T-cell (primary cell): ENCODE measurements at regions of chr19 and their contacts with region 1.

Region 1: DNA sequence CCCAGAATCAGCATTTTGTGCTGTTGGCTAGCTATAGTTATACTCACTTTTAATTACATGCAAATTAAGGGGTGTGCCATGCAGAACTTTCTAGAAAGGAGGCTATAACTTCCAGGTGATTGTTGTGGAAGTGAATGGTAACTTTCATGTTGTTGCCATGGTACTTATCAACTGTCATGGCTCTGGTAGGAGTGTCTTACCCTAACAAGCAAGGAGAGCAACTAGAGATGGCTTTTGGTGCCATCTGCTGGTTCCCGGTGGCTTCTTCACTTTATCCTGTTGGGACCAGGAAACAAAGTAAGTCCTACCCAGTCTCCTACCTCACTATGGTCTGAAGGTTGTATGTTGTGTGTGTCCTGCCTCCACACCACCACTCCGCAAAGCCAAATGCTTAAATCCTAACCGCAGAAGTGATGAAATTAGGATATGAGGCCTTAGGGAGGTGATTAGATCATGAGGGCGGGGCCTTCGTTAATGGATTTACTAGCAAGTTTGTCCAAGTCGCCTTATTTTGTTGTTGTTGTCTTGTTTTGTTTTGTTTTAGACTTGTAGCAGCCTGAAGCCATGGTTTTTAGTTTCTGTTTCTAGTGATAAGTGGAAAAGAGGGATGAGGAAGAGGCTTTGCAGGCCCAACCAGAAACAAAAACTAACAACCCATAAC is 22.6 kb downstream of the FBXL12 start:
- DNase-seq: peak; percentile 65 to 94 (median 84)
- ATAC-seq: peak; percentile 26 to 46 (median 40)
- H3K4me3 ChIP-seq: no peak overlapping the region
- H3K4me3 Mint-ChIP-seq: peak overlapping the region in 1 of 3 donors; percentile 26
- H3K27ac ChIP-seq: peak overlapping the region; percentile 86
- H3K27ac Mint-ChIP-seq: peak overlapping the region; percentile 81 to 89
- H3K4me1 ChIP-seq: peaks cover 6 to 30% of the 10 kb centered on the region in 2 experiments
- H3K4me1 Mint-ChIP-seq: peaks cover 25 to 38% (median 26%) of the 10 kb centered on the region in 3 donors
- H3K27me3 ChIP-seq: no peaks in the 10 kb centered on the region
- H3K27me3 Mint-ChIP-seq: no peaks in the 10 kb centered on the region

Region 2: GRCh38 chr19:9645472-9645871 is 150.8 kb before region 1 on chr19:
- CTCF ChIA-PET with region 1: interaction called in 1 of 2 experiments, 4 read pairs
- POLR2A ChIA-PET with region 1: interaction called in 1 of 2 experiments, 10 read pairs
- DNase-seq: peak in 1 of 35 experiments; percentile 16
- ATAC-seq: no peak
- H3K4me3 ChIP-seq: no peak overlapping the region
- H3K4me3 Mint-ChIP-seq: no peak overlapping the region
- H3K27ac ChIP-seq: no peak overlapping the region
- H3K27ac Mint-ChIP-seq: no peak overlapping the region
- H3K4me1 ChIP-seq: no peaks in the 10 kb centered on the region
- H3K4me1 Mint-ChIP-seq: peaks cover 2 to 6% (median 2%) of the 10 kb centered on the region in 3 donors
- H3K27me3 ChIP-seq: no peaks in the 10 kb centered on the region
- H3K27me3 Mint-ChIP-seq: no peaks in the 10 kb centered on the region